Gastrocnemius medialis (tissue), 4 donors: ENCODE measurements at regions of chr6 and their contacts with region 1.

Region 1: DNA sequence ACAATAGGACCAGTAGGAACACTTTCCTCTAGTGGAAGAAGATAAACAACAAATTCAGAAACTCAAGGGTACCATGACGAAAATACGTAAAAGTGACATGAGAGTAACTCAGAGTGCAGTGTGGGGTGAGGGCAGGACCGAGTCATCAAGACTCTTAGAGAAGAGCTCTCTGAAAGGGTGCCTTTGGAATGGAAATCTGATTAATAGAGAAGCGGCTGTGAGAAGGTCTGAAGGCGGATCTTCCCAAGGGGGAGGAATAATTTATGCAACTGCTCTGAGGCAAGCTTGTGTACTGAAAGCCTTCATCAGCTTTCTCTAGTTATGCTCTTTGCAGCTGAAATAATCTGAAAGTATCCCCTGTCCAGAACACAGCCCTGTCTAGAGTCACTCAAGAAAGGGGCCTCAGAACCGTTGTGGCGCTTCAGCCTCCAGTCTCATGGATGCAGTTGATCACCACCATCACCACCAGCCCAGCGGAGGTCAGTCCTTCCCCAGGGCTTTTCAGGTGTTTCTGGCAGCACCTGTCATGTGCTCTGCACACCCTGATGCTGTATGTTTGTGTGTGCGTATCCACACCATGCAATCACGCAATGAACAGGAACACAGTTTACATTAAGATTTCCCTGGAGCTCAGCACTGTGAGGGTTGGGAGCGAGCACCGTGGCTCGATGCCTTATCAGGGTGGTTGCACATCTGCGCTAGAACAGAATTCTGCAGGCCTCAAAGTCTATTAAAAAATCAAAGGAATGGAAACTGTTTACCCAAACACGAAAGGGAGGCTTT is 396.5 kb downstream of the SMOC2 start:
- DNase-seq: no peak
- ATAC-seq: no peak
- H3K4me3 ChIP-seq: no peak overlapping the region
- H3K27ac ChIP-seq: no peak overlapping the region
- H3K4me1 ChIP-seq: no peaks in the 10 kb centered on the region
- H3K27me3 ChIP-seq: no peaks in the 10 kb centered on the region
- CTCF ChIP-seq: no peak
- POLR2A ChIP-seq: no peak

Region 2: GRCh38 chr6:168823397-168824212 is 13.8 kb before region 1 on chr6:
- in situ Hi-C with region 1: no loop called
- intact Hi-C with region 1: no loop called
- DNase-seq: no peak
- ATAC-seq: no peak
- H3K4me3 ChIP-seq: no peak overlapping the region
- H3K27ac ChIP-seq: no peak overlapping the region
- H3K4me1 ChIP-seq: no peaks in the 10 kb centered on the region
- H3K27me3 ChIP-seq: no peaks in the 10 kb centered on the region
- CTCF ChIP-seq: no peak
- POLR2A ChIP-seq: no peak

Region 3: DNA sequence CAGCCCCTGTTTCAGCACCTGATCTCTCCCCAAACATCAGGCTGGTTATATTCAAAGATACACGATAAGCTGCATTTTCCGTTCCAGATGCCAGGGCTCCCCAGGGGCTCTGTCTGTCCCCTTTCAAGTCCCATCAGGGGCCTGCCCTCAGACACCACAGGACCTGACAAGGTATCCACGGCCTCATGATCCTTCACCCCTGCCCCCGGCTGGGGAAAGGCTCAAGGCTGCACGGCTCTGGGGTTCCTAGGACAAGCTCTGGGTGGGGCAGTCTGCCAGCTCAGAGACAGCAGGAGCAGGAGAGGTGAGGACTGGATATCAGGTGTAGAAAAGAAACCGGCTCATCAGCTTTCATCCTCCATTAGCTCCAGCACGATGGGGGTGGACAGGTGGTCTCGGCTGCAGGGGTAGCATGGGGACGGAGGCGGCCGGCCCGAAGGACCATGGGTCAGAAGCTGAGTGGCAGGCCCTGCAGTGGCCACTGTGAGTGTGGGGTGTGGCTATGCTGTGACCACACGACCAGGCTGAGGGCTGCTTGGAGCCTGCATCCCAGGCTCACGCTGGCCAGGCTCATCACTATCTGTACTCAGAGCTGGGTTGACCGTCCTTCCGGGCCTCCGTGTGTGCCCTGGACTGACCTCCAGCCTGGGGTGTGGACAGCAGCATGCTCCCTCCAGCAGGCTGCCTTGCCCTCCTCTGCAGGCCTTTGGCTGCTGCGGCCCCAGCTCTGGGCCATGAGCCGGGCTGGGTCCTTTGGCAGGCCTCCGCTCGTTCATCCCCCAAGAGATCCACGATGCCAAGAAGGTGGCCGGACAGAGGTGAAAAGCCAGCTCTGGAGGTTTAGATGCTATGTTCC is 30.0 kb after region 1 on chr6:
- in situ Hi-C with region 1: no loop called
- intact Hi-C with region 1: loop called (anchors 1 kb)
- DNase-seq: no peak
- ATAC-seq: no peak
- H3K4me3 ChIP-seq: no peak overlapping the region
- H3K27ac ChIP-seq: no peak overlapping the region
- H3K4me1 ChIP-seq: peaks cover 0 to 10% of the 10 kb centered on the region in 2 donors
- H3K27me3 ChIP-seq: peaks cover 0 to 7% (median 0%) of the 10 kb centered on the region in 3 donors
- CTCF ChIP-seq: no peak
- POLR2A ChIP-seq: no peak